Calu3 (cell line): ENCODE measurements at regions of chr11 and their contacts with region 1.

Region 1: DNA sequence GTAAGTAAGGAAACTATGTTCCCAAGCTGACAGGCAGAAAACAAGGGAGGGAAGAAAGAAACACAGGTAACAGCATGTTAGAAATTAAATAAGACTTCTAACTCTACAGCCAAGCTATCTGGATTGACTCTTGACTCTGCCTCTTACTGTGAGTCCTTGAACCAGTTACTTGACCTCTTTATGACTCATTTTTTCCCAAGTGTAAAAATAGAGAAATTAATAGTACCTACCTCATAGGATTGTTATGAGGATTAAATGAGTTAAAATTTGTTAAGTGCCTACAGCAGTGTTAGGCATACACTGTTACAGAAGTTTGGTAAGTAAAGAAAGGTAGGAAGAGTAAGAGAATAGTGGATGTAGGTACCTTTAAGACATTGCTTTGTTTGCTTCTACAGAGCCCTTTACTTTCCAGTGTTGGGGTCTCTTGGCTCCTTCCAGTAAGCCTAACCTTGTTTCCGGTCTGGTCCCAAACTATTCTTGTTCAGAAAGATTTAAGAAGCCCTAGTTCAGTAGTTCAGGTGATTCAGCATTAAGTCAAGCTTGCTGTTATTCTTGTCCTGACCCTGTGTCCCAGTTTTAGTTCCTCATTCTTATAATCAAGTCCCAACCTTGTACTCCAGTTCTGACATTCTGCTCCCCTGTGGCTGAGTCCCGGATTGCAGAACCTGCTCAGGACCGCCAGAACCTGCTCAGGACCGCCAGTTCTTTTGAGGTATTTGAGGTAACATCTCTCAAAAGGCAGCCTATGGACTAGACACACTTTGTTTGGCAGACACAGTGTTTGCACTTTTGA is 963.4 kb upstream of the CCDC90B start:
- DNase-seq: no peak
- H3K4me3 Mint-ChIP-seq: no peak overlapping the region
- H3K27ac Mint-ChIP-seq: no peak overlapping the region
- H3K4me1 Mint-ChIP-seq: no peaks in the 10 kb centered on the region
- H3K27me3 Mint-ChIP-seq: no peaks in the 10 kb centered on the region
- CTCF ChIP-seq: no peak

Region 2: GRCh38 chr11:83285771-83286528 is 963.6 kb before region 1 on chr11 and contains the start of gene CCDC90B:
- CTCF ChIA-PET with region 1: no interaction called
- intact Hi-C with region 1: loop called (anchors 10 kb)
- DNase-seq: peak; percentile 85
- H3K4me3 Mint-ChIP-seq: peak within 1 kb of the TSS; percentile 85
- H3K27ac Mint-ChIP-seq: peak within 1 kb of the TSS; percentile 80
- H3K4me1 Mint-ChIP-seq: peaks cover 7% of the 10 kb centered on the region
- H3K27me3 Mint-ChIP-seq: no peaks in the 10 kb centered on the region
- CTCF ChIP-seq: no peak
- total RNA-seq, gene CCDC90B: 21.8 and 23.3 TPM in 2 replicates

Region 3: DNA sequence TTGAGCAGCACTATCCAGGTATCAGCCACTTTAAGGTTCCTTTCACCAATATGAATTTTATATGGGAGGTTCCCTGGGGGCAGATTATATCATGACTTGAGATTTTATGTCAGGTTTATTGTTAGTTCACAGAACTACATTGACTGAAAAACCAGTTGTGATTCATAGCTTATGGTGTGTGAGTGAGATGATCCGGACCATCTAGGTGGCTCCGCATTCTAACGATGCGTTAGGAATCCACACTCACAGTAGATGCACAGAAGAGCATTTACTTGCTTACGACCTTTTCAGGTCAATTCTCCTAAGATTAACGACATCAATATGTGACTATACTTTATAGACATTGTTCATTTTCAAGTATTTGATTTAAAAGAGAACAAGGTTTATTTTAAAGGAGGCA is 20.9 kb after region 1 on chr11:
- CTCF ChIA-PET with region 1: no interaction called
- intact Hi-C with region 1: no loop called
- DNase-seq: no peak
- H3K4me3 Mint-ChIP-seq: no peak overlapping the region
- H3K27ac Mint-ChIP-seq: no peak overlapping the region
- H3K4me1 Mint-ChIP-seq: no peaks in the 10 kb centered on the region
- H3K27me3 Mint-ChIP-seq: peaks cover 14% of the 10 kb centered on the region
- CTCF ChIP-seq: no peak

Region 4: GRCh38 chr11:84408946-84409411 is 159.4 kb after region 1 on chr11:
- CTCF ChIA-PET with region 1: no interaction called
- intact Hi-C with region 1: no loop called
- DNase-seq: no peak
- H3K4me3 Mint-ChIP-seq: no peak overlapping the region
- H3K27ac Mint-ChIP-seq: no peak overlapping the region
- H3K4me1 Mint-ChIP-seq: no peaks in the 10 kb centered on the region
- H3K27me3 Mint-ChIP-seq: peaks cover 5% of the 10 kb centered on the region
- CTCF ChIP-seq: no peak